ENCODE measurements at regions of chr1 and their contacts with region 1.

Region 1: GRCh38 chr1:206635080-206635977 is at the start of gene DYRK3:
- DNase-seq: peak; percentile 97
- H3K4me3 ChIP-seq: peak within 1 kb of the TSS; percentile 66 to 99 (median 86)
- H3K27ac ChIP-seq: peak within 1 kb of the TSS; percentile 76 to 90 (median 86)
- H3K4me1 ChIP-seq: peaks cover 20 to 50% (median 42%) of the 10 kb centered on the region in 4 donors
- H3K27me3 ChIP-seq: no peaks in the 10 kb centered on the region
- CTCF ChIP-seq: peak in 2 of 3 experiments; percentile 24 to 25
- EP300 ChIP-seq: no peak
- POLR2A ChIP-seq: peak; percentile 79
- total RNA-seq, gene DYRK3: 5.6 to 14.7 (median 9.0) TPM

Region 2: GRCh38 chr1:206663832-206664652 is 28.7 kb after region 1 on chr1:
- intact Hi-C with region 1: loop called (anchors 2 kb)
- DNase-seq: peak; percentile 94
- H3K4me3 ChIP-seq: peak overlapping the region; percentile 21 to 35 (median 26)
- H3K27ac ChIP-seq: no peak overlapping the region
- H3K4me1 ChIP-seq: peaks cover 16 to 30% (median 21%) of the 10 kb centered on the region in 4 donors
- H3K27me3 ChIP-seq: no peaks in the 10 kb centered on the region
- CTCF ChIP-seq: peak; percentile 82 to 90 (median 89)
- EP300 ChIP-seq: no peak
- POLR2A ChIP-seq: no peak

Region 3: DNA sequence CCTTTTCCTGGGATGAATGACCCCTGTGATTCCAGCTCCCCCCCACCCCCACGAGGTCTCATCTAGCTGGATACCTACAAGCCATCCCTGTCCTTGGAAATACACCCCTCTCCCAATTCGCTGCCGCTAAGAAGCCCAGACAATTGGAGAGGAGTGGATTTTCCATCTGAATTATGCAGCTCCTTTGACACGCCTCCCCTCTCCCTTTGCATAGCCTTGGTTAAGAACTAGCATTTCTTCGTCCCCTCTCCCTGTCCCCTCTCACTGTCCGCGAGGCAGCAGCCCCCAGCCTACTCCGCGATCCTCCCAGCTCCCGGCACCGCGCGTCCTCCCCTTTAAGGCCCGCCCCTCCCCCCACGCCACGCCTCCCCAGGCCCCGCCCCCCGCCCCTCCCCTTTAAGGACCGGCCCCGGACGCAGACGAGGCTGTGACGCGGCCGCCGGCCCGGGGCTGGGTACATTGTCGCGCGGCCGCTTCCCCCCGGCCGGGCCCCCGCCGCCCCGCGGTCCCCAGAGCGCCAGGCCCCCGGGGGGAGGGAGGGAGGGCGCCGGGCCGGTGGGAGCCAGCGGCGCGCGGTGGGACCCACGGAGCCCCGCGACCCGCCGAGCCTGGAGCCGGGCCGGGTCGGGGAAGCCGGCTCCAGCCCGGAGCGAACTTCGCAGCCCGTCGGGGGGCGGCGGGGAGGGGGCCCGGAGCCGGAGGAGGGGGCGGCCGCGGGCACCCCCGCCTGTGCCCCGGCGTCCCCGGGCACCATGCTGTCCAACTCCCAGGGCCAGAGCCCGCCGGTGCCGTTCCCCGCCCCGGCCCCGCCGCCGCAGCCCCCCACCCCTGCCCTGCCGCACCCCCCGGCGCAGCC is 49.4 kb after region 1 on chr1 and contains the start of gene MAPKAPK2:
- intact Hi-C with region 1: no loop called
- DNase-seq: peak; percentile 97
- H3K4me3 ChIP-seq: peak within 1 kb of the TSS; percentile 69 to 96 (median 86)
- H3K27ac ChIP-seq: peak within 1 kb of the TSS; percentile 93 to 100 (median 98)
- H3K4me1 ChIP-seq: peaks cover 26 to 44% (median 42%) of the 10 kb centered on the region in 4 donors
- H3K27me3 ChIP-seq: no peaks in the 10 kb centered on the region
- CTCF ChIP-seq: no peak
- EP300 ChIP-seq: no peak
- POLR2A ChIP-seq: no peak
- total RNA-seq, gene MAPKAPK2: 37.8 to 70.1 (median 61.7) TPM

Region 4: DNA sequence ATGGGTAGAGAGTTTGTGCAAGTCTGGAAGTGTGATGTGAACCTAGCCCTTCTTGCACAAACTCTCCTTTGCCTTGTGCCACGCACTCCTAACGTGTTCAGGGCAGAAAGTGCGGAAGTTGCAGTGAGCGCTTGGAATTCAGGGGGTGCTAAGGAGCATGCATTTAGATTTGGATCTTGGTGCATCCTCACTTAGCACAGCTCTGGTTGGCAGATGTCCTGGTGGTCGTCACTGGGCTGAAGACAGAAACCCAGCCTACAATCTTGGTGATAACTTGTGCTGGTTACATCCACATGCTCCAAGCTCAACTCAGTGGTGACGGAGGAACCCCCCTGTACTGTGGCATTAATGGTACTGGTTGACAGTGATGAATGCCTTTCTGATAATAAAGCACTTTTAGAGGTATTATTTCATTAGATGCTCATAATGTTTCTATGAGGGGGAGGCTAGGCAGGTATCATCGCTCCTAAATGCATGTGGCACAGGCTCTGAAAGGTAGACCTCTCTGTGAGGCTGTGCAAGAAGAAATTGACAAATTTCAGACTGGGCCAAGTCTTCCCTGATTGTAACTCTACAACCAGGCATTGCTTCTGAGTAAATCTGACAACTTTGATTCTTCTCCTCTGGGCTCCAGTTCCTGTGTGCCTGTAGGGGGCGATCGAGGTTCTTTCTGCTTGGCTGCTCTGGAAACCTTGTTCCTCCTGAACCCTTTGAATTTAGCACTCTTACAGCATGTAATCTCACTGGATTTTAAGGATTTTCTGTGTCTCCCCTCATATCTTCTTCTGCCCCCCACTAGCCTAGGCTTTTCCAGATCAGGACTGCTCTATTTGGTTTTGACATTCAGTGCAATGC is 90.0 kb after region 1 on chr1:
- intact Hi-C with region 1: loop called (anchors 5 kb)
- DNase-seq: no peak
- H3K4me3 ChIP-seq: no peak overlapping the region
- H3K27ac ChIP-seq: no peak overlapping the region
- H3K4me1 ChIP-seq: peaks cover 69 to 78% (median 76%) of the 10 kb centered on the region in 4 donors
- H3K27me3 ChIP-seq: no peaks in the 10 kb centered on the region
- CTCF ChIP-seq: peak; percentile 13 to 49 (median 36)
- EP300 ChIP-seq: no peak
- POLR2A ChIP-seq: no peak

Region 5: GRCh38 chr1:206808615-206809014 is 173.3 kb after region 1 on chr1:
- intact Hi-C with region 1: loop called (anchors 10 kb)
- DNase-seq: no peak
- H3K4me3 ChIP-seq: no peak overlapping the region
- H3K27ac ChIP-seq: no peak overlapping the region
- H3K4me1 ChIP-seq: no peaks in the 10 kb centered on the region
- H3K27me3 ChIP-seq: no peaks in the 10 kb centered on the region
- CTCF ChIP-seq: peak in 1 of 3 experiments; percentile 28
- EP300 ChIP-seq: no peak
- POLR2A ChIP-seq: no peak

Region 6: GRCh38 chr1:206826405-206826804 is 191.1 kb after region 1 on chr1:
- intact Hi-C with region 1: no loop called
- DNase-seq: no peak
- H3K4me3 ChIP-seq: no peak overlapping the region
- H3K27ac ChIP-seq: no peak overlapping the region
- H3K4me1 ChIP-seq: peaks cover 0 to 19% (median 16%) of the 10 kb centered on the region in 4 donors
- H3K27me3 ChIP-seq: no peaks in the 10 kb centered on the region
- CTCF ChIP-seq: no peak
- EP300 ChIP-seq: no peak
- POLR2A ChIP-seq: no peak